Posterior vena cava (tissue), 2 donors: ENCODE measurements at regions of chr7 and their contacts with region 1.

Region 1: GRCh38 chr7:119132436-119132835 is 907.9 kb downstream of the ANKRD7 start:
- DNase-seq: no peak

Region 2: DNA sequence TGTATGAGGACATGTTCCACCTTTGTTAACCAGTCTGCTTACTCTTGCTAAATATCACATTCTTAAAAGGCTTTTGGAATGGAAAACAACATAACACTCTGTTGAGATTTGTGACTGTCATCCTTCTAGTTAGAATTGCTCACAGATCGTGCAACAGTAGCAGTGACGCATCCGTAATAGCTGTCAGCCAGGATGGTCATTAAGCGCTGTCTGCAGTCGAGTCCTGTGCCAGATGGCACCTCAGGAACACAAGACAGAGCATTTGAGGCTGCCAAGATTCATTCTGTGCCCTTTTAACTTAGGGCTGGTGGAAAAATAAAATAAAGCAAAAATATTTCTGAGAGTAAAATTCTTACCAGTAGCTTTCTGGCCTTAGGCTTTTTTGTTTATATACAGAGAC is 559.4 kb before region 1 on chr7:
- intact Hi-C with region 1: no loop called
- DNase-seq: no peak

Region 3: GRCh38 chr7:118657391-118658005 is 474.9 kb before region 1 on chr7:
- intact Hi-C with region 1: loop called in 1 of 2 experiments (anchors 5 kb)
- DNase-seq: no peak

Region 4: DNA sequence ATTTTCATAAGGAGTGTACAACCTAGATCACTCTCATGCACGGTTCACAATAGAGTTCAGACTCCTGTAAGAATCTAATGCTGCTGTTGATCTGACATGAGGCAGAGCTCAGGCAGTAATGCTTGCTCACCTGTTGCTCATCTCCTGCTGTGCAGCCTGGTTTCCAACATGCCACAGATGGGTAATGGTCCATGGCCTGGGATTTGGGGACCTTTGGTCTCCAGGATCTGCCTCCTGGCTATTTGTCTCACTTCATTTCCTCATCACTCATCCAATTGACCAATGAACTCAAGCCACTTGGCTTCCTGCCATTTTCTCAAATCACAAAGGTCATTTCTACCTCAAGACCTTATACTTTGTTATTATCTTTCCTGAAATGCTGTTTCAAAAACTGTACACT is 121.8 kb before region 1 on chr7:
- intact Hi-C with region 1: no loop called
- DNase-seq: no peak